GM12878 (cell line): ENCODE measurements at regions of chr1 and their contacts with region 1.

Region 1: DNA sequence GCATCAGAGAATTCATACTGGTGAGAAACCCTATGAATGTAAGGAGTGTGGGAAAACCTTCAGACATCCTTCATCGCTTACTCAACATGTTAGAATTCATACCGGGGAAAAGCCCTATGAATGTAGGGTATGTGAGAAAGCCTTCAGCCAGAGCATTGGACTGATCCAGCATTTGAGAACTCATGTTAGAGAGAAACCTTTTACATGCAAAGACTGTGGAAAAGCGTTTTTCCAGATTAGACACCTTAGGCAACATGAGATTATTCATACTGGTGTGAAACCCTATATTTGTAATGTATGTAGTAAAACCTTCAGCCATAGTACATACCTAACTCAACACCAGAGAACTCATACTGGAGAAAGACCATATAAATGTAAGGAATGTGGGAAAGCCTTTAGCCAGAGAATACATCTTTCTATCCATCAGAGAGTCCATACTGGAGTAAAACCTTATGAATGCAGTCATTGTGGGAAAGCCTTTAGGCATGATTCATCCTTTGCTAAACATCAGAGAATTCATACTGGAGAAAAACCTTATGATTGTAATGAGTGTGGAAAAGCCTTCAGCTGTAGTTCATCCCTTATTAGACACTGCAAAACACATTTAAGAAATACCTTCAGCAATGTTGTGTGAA is 12.8 kb downstream of the ZFP69B start:
- DNase-seq: no peak
- ATAC-seq: no peak
- H3K4me3 ChIP-seq: no peak overlapping the region
- H3K27ac ChIP-seq: no peak overlapping the region
- H3K4me1 ChIP-seq: no peaks in the 10 kb centered on the region
- H3K27me3 ChIP-seq: no peaks in the 10 kb centered on the region
- CTCF ChIP-seq: no peak
- EP300 ChIP-seq: no peak
- POLR2A ChIP-seq: no peak
- RAD21 ChIP-seq: no peak

Region 2: GRCh38 chr1:40495315-40495903 is 32.3 kb after region 1 on chr1:
- CTCF ChIA-PET with region 1: no interaction called
- POLR2A ChIA-PET with region 1: interaction called, 6 read pairs
- RAD21 ChIA-PET with region 1: no interaction called
- SMC1A ChIA-PET with region 1: no interaction called
- in situ Hi-C with region 1: no loop called
- intact Hi-C with region 1: loop called (anchors 2 kb)
- DNase-seq: no peak
- ATAC-seq: no peak
- H3K4me3 ChIP-seq: no peak overlapping the region
- H3K27ac ChIP-seq: no peak overlapping the region
- H3K4me1 ChIP-seq: no peaks in the 10 kb centered on the region
- H3K27me3 ChIP-seq: no peaks in the 10 kb centered on the region
- CTCF ChIP-seq: no peak
- EP300 ChIP-seq: no peak
- POLR2A ChIP-seq: no peak
- RAD21 ChIP-seq: no peak